ENCODE measurements at regions of chr15 and their contacts with region 1.

Region 1: GRCh38 chr15:49421991-49422390 is 1.1 kb upstream of the FGF7 start:
- DNase-seq: peak; percentile 79
- H3K4me3 ChIP-seq: no peak overlapping the region
- H3K27ac ChIP-seq: no peak overlapping the region
- H3K4me1 ChIP-seq: no peaks in the 10 kb centered on the region
- H3K27me3 ChIP-seq: no peaks in the 10 kb centered on the region
- CTCF ChIP-seq: peak; percentile 86

Region 2: GRCh38 chr15:48352474-48353072 is 1069.4 kb before region 1 on chr15:
- CTCF ChIA-PET with region 1: no interaction called
- POLR2A ChIA-PET with region 1: no interaction called
- intact Hi-C with region 1: loop called (anchors 10 kb)
- DNase-seq: peak; percentile 83
- H3K4me3 ChIP-seq: no peak overlapping the region
- H3K27ac ChIP-seq: no peak overlapping the region
- H3K4me1 ChIP-seq: no peaks in the 10 kb centered on the region
- H3K27me3 ChIP-seq: no peaks in the 10 kb centered on the region
- CTCF ChIP-seq: peak; percentile 89

Region 3: GRCh38 chr15:49235446-49236124 is 186.4 kb before region 1 on chr15:
- CTCF ChIA-PET with region 1: interaction called, 31 read pairs
- POLR2A ChIA-PET with region 1: no interaction called
- intact Hi-C with region 1: loop called (anchors 1 kb)
- DNase-seq: peak; percentile 84
- H3K4me3 ChIP-seq: no peak overlapping the region
- H3K27ac ChIP-seq: no peak overlapping the region
- H3K4me1 ChIP-seq: peaks cover 33% of the 10 kb centered on the region
- H3K27me3 ChIP-seq: no peaks in the 10 kb centered on the region
- CTCF ChIP-seq: peak; percentile 83

Region 4: GRCh38 chr15:49406352-49407118 is 15.5 kb before region 1 on chr15:
- CTCF ChIA-PET with region 1: no interaction called
- POLR2A ChIA-PET with region 1: no interaction called
- intact Hi-C with region 1: no loop called
- DNase-seq: no peak
- H3K4me3 ChIP-seq: no peak overlapping the region
- H3K27ac ChIP-seq: no peak overlapping the region
- H3K4me1 ChIP-seq: no peaks in the 10 kb centered on the region
- H3K27me3 ChIP-seq: peaks cover 2% of the 10 kb centered on the region
- CTCF ChIP-seq: no peak

Region 5: DNA sequence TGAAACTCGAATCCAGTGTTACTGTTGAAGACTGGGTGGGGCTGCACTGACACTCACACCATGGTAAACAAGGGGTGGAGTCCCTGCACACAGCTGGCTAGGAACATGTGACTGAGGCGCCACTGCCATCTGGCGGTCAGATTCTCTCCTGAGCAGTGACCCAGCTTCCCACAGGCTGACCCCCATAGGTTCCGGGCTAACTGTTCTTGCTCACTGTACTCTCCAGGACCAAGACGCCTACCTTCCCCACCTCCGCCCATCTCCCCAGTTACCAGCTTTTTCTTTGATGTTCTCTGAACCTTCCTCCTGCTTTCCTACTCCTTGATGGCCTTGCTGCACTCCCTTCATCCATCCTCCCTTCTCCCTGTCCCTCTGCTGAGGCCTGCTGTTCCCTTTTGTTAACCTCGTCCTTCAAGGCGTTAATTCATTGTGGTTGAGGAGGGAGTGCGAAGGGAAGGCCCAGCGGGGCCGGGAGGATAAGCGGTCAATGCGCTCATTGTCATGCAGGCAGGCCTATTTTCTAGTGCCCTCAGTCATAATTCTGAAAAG is 581.9 kb after region 1 on chr15:
- CTCF ChIA-PET with region 1: no interaction called
- POLR2A ChIA-PET with region 1: no interaction called
- intact Hi-C with region 1: loop called (anchors 5 kb)
- DNase-seq: peak; percentile 77
- H3K4me3 ChIP-seq: no peak overlapping the region
- H3K27ac ChIP-seq: no peak overlapping the region
- H3K4me1 ChIP-seq: no peaks in the 10 kb centered on the region
- H3K27me3 ChIP-seq: peaks cover 4% of the 10 kb centered on the region
- CTCF ChIP-seq: peak; percentile 82

Region 6: DNA sequence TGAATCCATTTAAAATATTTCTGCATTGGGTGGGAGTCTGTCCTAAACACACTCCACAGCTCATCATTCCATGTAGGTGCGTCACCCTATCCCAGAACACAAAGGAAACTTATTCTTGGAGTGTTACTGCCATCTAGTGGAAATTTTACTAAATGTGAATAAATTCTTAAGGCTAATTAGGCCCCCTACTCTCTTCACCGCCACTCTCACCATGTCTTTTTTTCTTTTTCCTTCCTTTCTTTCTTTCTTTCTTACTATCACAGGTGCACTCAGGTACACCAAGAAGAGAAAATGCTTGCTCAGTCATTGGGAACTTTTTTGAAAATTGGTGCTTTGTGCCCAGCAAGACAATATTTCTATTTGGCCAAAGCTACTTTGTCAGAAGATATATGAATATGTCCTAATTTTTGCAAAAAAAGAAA is 723.5 kb after region 1 on chr15:
- CTCF ChIA-PET with region 1: interaction called, 3 read pairs
- POLR2A ChIA-PET with region 1: no interaction called
- intact Hi-C with region 1: loop called (anchors 10 kb)
- DNase-seq: peak; percentile 86
- H3K4me3 ChIP-seq: no peak overlapping the region
- H3K27ac ChIP-seq: no peak overlapping the region
- H3K4me1 ChIP-seq: peaks cover 6% of the 10 kb centered on the region
- H3K27me3 ChIP-seq: no peaks in the 10 kb centered on the region
- CTCF ChIP-seq: peak; percentile 60

Region 7: DNA sequence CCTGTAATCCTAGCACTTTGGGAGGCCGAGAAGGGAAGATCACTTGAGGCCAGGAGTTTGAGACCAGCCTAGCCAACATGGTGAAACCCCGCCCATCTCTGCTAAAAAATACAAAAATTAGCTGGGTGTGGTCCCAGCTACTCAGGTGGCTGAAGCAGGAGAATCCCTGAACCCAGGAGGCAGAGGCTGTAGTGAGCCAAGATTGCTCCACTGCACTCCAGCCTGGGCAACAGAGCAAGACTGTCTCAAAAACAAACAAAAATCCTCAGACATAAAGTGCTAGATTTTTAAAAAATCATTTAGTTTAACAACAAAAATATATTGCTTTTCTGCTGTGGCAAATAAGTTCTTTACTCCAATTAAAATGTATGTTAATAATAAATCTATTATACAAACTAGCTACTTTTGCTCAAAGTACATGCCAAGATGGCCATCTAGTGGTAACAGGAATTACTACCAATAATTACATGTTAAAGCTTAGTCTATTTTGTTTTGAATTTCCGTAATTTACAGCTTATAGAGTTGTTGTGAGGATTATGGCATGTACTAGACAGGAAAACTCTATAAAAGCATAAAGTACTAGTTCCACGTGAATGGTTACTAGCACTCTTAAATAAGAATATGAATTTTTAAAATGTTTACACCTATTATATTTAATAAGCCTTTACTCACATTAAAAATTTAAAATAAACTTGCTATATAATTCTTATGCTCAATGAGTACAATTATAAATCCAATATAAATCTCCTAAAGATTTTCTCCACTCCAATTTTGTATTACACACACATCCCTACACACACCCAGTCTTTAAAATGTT is 894.0 kb after region 1 on chr15:
- CTCF ChIA-PET with region 1: no interaction called
- POLR2A ChIA-PET with region 1: no interaction called
- intact Hi-C with region 1: loop called (anchors 10 kb)
- DNase-seq: peak; percentile 56
- H3K4me3 ChIP-seq: no peak overlapping the region
- H3K27ac ChIP-seq: no peak overlapping the region
- H3K4me1 ChIP-seq: peaks cover 10% of the 10 kb centered on the region
- H3K27me3 ChIP-seq: no peaks in the 10 kb centered on the region
- CTCF ChIP-seq: peak; percentile 78

Measured in A673 (cell line).